Body of pancreas (tissue), 4 donors: ENCODE measurements at regions of chr1 and their contacts with region 1.

Region 1: DNA sequence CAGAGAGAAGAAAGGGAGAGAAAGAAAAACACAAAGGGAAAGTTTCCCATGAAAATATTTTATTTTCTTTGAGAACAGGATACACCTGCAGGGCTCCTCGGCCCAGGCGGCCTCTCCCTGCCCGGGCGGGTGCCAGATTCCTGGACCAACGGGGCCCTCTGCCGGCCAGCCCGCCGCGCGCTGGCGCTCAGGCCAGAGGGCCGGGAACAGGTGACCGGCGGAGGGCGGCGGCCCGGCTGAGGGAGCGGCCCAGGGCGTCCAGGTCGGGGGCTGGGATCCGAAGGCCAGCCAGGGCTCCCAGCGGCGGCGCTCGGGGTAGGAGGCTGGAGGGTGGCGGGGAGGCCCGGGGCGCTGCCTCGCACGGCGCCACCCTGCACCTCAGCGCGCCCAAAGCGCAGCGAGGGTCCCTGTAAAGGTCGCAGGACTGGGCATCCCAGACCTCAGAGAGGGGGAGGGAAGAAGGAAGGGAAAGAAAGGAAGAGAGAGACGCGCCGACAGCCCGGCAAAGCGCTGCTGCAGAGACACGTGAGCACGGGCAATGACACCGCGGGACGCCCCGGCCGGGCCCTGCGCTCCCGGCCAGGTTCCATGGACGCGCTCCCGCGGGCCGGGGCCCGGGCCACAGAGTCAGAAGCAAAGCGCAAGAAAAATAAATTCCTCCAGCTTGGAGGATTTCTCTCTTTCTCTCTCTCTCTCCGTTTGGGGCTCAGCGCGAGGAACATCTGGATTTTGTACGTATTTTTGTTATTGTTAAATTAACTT is 927 bp downstream of the WNT9A start:
- DNase-seq: peak; percentile 85 to 91 (median 88)
- ATAC-seq: peak; percentile 86
- H3K4me3 ChIP-seq: peak overlapping the region in 1 of 2 donors; percentile 27
- H3K27ac ChIP-seq: peak overlapping the region; percentile 80 to 91 (median 86)
- H3K4me1 ChIP-seq: peaks cover 35% of the 10 kb centered on the region
- H3K27me3 ChIP-seq: no peaks in the 10 kb centered on the region
- CTCF ChIP-seq: peak; percentile 62 to 95 (median 77)
- POLR2A ChIP-seq: peak in 1 of 3 donors; percentile 30

Region 2: GRCh38 chr1:227489572-227489971 is 457.2 kb before region 1 on chr1:
- intact Hi-C with region 1: loop called (anchors 10 kb)
- DNase-seq: no peak
- ATAC-seq: no peak
- H3K4me3 ChIP-seq: no peak overlapping the region
- H3K27ac ChIP-seq: no peak overlapping the region
- H3K4me1 ChIP-seq: no peaks in the 10 kb centered on the region
- H3K27me3 ChIP-seq: no peaks in the 10 kb centered on the region
- CTCF ChIP-seq: no peak
- POLR2A ChIP-seq: no peak

Region 3: GRCh38 chr1:227762233-227762911 is 184.4 kb before region 1 on chr1:
- intact Hi-C with region 1: loop called (anchors 5 kb)
- DNase-seq: peak; percentile 85 to 90 (median 87)
- ATAC-seq: peak; percentile 86
- H3K4me3 ChIP-seq: no peak overlapping the region
- H3K27ac ChIP-seq: peak overlapping the region in 1 of 4 donors; percentile 5
- H3K4me1 ChIP-seq: peaks cover 20% of the 10 kb centered on the region
- H3K27me3 ChIP-seq: no peaks in the 10 kb centered on the region
- CTCF ChIP-seq: peak; percentile 75 to 94 (median 85)
- POLR2A ChIP-seq: no peak